ENCODE measurements at regions of chr13 and their contacts with region 1.

Region 1: GRCh38 chr13:79435561-79435990 is 29.5 kb upstream of the RBM26 start:
- DNase-seq: no peak
- H3K4me3 ChIP-seq: no peak overlapping the region
- H3K27ac ChIP-seq: no peak overlapping the region
- H3K4me1 ChIP-seq: no peaks in the 10 kb centered on the region
- H3K27me3 ChIP-seq: no peaks in the 10 kb centered on the region
- CTCF ChIP-seq: no peak
- POLR2A ChIP-seq: no peak

Region 2: DNA sequence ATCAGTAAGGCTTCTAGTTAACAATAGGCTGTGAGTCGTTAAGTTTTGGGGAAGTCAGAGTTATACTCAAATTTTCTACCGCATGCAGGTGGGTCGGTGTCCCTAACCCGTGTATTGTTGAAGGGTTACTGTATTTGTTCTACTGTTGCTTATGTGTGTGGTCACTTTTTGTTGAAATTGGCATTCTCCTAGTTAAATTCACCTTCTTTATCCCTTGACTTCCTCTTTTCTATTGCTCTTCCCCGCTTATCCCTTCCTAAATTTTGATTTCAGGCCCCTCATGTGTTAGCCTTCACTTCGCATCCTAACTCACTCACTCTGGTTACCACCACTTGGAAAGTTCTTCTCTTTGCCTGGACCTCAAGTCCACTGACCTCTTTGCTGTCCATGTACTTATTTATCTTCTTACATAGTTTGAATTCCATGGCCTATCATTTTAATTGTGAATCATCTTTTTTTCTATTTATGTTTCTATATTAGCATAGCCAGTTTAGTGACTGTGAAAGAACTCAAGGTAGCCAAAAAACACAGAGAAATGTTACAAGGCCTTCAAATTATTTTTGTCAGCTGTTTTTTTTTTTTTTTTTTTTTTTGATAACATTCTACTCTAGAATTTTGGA is 98.3 kb after region 1 on chr13:
- intact Hi-C with region 1: loop called (anchors 10 kb)
- DNase-seq: no peak
- H3K4me3 ChIP-seq: no peak overlapping the region
- H3K27ac ChIP-seq: no peak overlapping the region
- H3K4me1 ChIP-seq: peaks cover 9% of the 10 kb centered on the region
- H3K27me3 ChIP-seq: no peaks in the 10 kb centered on the region
- CTCF ChIP-seq: no peak
- POLR2A ChIP-seq: no peak